ENCODE measurements at regions of chr3 and their contacts with region 1.

Region 1: DNA sequence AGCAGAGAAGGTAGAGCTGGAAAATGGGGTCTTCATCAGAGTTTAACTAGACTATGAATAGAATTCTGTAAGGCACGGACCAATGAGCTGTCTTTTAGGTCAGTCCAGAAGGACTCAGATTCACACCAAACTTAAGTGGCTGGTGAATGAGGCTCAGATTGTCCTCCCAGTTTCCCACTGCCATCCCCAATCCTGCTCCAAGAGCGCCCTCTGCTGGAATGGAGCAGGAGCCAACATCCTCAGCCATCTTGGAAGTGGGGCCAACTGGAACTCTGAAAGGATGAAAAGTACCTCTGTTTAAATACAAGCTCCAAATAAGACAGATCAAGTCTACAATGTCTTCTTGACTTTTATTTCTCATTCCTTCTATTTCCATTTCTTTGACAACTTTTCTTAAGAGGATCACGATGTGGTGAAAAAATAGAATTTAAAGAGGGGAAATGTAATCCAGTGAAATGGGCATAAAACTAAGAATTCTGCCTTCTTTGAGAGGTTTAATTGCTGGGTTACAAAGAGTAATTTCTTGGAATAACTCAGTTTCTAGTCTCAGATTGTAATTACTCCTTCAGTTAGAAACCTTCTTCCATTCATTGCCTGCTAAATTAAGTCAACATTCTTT is 217.1 kb upstream of the TPRG1 start:
- DNase-seq: no peak
- H3K4me3 ChIP-seq: no peak overlapping the region
- CTCF ChIP-seq: peak; percentile 89

Region 2: GRCh38 chr3:188262913-188263683 is 691.6 kb before region 1 on chr3:
- CTCF ChIA-PET with region 1: interaction called, 20 read pairs
- POLR2A ChIA-PET with region 1: interaction called, 3 read pairs
- DNase-seq: no peak
- H3K4me3 ChIP-seq: no peak overlapping the region
- CTCF ChIP-seq: no peak

Region 3: DNA sequence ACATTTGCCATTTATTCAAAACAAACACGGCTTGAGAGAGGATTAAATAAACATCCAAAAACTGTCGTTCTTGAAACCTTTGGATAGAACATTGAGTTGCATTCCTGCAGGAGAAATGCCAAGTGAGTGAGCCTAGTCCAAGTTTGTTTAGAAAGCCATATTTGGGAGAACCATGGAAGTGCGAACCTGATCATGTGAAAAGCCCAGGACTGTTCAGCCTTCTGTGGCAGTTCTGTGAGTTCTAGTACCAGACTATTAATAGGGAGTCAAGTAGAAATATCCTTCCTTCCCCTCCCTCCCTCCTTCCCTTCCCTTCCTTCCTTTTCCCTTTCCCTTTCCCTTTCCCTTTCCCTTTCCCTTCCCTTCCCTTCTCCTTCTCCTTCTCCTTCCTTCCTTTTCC is 330.3 kb before region 1 on chr3:
- CTCF ChIA-PET with region 1: interaction called, 13 read pairs
- POLR2A ChIA-PET with region 1: no interaction called
- DNase-seq: no peak
- H3K4me3 ChIP-seq: no peak overlapping the region
- CTCF ChIP-seq: no peak

Region 4: DNA sequence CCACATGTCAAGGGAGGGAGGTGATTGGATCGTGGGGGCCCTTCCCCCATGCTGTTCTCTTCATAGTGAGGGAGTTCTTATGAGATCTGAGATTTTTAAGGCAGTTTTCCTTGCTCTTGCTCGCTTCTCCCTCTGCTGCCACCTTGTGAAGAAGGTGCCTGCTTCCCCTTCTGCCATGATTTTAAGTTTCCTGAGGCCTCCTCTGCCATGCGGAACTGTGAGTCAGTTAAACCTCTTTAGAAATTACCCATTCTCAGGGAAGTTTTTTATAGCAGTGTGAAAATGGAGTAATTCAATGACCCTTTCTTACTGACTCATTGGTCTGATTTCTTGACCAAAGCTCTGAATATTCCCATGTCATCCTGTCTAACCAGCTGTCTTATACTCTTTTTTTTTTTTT is 267.3 kb before region 1 on chr3:
- CTCF ChIA-PET with region 1: interaction called, 19 read pairs
- POLR2A ChIA-PET with region 1: no interaction called
- DNase-seq: peak; percentile 38
- H3K4me3 ChIP-seq: no peak overlapping the region
- CTCF ChIP-seq: peak; percentile 31

Region 5: DNA sequence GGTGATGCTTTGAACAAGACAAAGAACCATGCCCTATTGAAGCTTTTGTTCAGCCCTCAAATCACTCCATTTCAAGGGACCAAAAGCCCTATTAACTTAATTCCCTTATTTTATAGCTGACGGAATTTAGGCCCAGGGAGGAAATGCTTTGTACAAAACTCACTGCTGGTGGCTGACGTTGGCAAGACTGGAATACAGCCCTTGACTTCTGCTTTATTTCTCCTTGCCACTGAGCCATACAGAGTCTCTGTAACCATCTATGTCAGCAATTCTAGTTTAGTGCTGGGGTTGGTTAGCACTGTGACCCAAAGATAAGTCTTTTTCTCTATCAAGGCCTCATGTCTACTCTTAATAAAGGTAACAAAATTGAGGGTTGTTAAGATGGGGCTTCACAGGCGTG is 99.0 kb before region 1 on chr3:
- CTCF ChIA-PET with region 1: interaction called, 15 read pairs
- POLR2A ChIA-PET with region 1: no interaction called
- DNase-seq: no peak
- H3K4me3 ChIP-seq: no peak overlapping the region
- CTCF ChIP-seq: no peak

Region 6: GRCh38 chr3:189148081-189148507 is 193.4 kb after region 1 on chr3:
- CTCF ChIA-PET with region 1: interaction called, 28 read pairs
- POLR2A ChIA-PET with region 1: no interaction called
- DNase-seq: no peak
- H3K4me3 ChIP-seq: no peak overlapping the region
- CTCF ChIP-seq: peak; percentile 68